A673 (cell line): ENCODE measurements at regions of chr9 and their contacts with region 1.

Region 1: GRCh38 chr9:89815903-89816573 is 211.2 kb downstream of the GADD45G start:
- DNase-seq: no peak
- H3K4me3 ChIP-seq: no peak overlapping the region
- H3K27ac ChIP-seq: no peak overlapping the region
- H3K4me1 ChIP-seq: peaks cover 3% of the 10 kb centered on the region
- H3K27me3 ChIP-seq: no peaks in the 10 kb centered on the region
- CTCF ChIP-seq: no peak

Region 2: DNA sequence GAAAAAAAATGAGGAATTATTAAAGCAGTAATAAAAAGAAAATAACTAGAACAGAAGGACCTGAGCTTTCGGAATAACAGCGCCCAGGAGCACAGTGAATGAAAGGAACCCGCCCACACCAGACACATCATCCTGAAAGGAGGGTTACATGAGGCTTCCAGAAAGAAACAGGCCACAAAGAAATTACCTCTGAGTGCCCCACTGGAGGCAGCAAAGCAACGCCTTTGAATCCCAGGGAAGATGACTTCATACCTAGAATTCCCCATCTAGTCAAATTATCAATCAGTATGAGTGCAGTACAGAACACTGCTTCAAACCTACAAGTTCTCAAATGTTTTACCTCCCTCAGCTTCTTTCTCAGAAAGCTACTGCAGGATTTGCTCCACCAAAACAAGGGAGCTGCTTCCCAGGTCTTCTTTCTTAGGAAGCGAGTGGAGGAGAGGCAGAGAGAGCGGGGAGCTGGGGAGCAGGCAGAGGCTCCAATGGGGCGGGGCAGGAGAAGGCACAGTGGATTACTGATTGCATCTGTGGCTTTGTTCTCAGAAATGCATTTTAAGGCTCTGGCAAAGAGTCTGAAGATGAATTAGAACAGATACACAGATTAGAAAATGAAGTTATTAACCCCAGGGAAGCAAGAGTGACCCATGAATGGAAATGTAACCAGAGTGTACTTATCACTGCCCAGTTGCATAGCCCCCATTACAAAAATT is 405.2 kb before region 1 on chr9:
- CTCF ChIA-PET with region 1: no interaction called
- POLR2A ChIA-PET with region 1: no interaction called
- intact Hi-C with region 1: loop called (anchors 10 kb)
- DNase-seq: no peak
- H3K4me3 ChIP-seq: no peak overlapping the region
- H3K27ac ChIP-seq: no peak overlapping the region
- H3K4me1 ChIP-seq: no peaks in the 10 kb centered on the region
- H3K27me3 ChIP-seq: no peaks in the 10 kb centered on the region
- CTCF ChIP-seq: no peak

Region 3: GRCh38 chr9:89770531-89771174 is 45.4 kb before region 1 on chr9:
- CTCF ChIA-PET with region 1: no interaction called
- POLR2A ChIA-PET with region 1: no interaction called
- intact Hi-C with region 1: no loop called
- DNase-seq: no peak
- H3K4me3 ChIP-seq: no peak overlapping the region
- H3K27ac ChIP-seq: no peak overlapping the region
- H3K4me1 ChIP-seq: no peaks in the 10 kb centered on the region
- H3K27me3 ChIP-seq: no peaks in the 10 kb centered on the region
- CTCF ChIP-seq: no peak